Aorta (tissue), 5 donors: ENCODE measurements at regions of chr6 and their contacts with region 1.

Region 1: GRCh38 chr6:118580585-118581419 is 32.7 kb downstream of the PLN start:
- DNase-seq: peak in 1 of 2 donors; percentile 69
- ATAC-seq: peak; percentile 93
- H3K4me3 ChIP-seq: no peak overlapping the region
- H3K27ac ChIP-seq: no peak overlapping the region
- H3K4me1 ChIP-seq: no peaks in the 10 kb centered on the region
- H3K27me3 ChIP-seq: no peaks in the 10 kb centered on the region

Region 2: DNA sequence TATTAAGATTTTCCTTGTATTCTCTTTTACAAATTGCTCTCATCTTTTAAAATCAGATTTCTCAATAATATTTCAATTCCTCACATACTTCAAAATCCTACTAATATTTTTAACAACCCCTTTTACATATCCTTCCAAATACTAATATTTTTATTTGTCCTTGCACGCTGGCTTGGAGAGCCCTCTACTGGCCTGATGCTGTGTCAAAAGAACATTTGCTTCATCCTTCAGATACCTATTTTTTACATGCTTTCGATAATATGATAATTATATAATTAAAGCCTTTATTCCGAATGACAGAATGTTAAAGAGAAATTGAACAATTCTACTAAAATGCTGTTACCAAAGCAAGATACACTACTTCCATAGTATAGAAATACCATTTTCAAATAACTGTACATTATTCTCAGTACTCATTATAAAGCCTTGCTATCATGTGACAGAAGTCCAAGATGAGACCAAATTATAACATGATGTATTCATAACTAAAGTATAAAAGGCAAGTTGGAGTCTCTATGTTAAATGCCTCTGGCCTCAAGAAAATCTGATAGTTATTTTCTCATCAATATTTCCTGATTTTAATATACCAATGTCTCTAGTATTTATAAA is 71.7 kb before region 1 on chr6:
- intact Hi-C with region 1: loop called in 1 of 2 experiments (anchors 5 kb)
- DNase-seq: no peak
- ATAC-seq: no peak
- H3K4me3 ChIP-seq: no peak overlapping the region
- H3K27ac ChIP-seq: no peak overlapping the region
- H3K4me1 ChIP-seq: peaks cover 2 to 3% of the 10 kb centered on the region in 2 donors
- H3K27me3 ChIP-seq: no peaks in the 10 kb centered on the region

Region 3: GRCh38 chr6:118618679-118619377 is 38.0 kb after region 1 on chr6:
- intact Hi-C with region 1: loop called in 1 of 2 experiments (anchors 5 kb)
- DNase-seq: peak; percentile 55 to 82
- ATAC-seq: peak; percentile 88
- H3K4me3 ChIP-seq: no peak overlapping the region
- H3K27ac ChIP-seq: no peak overlapping the region
- H3K4me1 ChIP-seq: no peaks in the 10 kb centered on the region
- H3K27me3 ChIP-seq: no peaks in the 10 kb centered on the region